ENCODE measurements at regions of chr17 and their contacts with region 1.

Region 1: GRCh38 chr17:79874329-79874981 is 35.2 kb upstream of the CBX4 start:
- DNase-seq: peak; percentile 75
- ATAC-seq: peak; percentile 93
- H3K4me3 ChIP-seq: no peak overlapping the region
- H3K27ac ChIP-seq: no peak overlapping the region
- H3K4me1 ChIP-seq: no peaks in the 10 kb centered on the region
- H3K27me3 ChIP-seq: no peaks in the 10 kb centered on the region
- CTCF ChIP-seq: peak; percentile 81

Region 2: DNA sequence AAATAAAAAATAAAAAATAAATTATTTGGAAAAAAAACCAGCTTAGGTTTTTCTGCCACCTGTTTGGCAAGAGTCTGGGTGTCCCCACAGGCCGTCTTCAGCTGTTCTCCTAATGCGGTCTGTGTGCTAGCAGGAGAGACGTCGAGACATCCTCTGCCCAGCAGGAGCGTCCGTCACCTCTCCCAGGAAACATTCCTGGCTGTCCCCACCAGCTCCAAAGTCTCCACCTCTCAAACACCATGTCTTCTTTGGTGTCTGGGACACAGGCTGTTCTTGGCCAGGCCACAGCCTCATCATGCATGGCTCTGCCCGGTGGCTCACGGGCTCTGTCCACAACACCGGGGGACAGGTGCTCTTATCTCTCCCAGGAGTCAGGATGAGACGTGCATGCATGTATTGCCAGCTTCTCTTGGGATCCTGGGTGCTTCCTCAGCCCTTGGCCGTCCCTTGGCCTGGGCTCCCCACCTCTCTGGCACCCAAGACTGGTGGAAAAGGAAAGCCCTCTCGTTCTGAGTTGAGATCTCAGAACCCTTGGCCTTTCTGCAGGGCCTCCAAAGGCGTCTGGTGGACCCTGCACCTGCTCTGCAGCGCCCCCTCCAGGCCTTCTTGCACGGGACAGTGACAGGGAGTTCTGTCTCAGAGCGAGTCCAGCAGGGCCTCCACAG is 49.7 kb after region 1 on chr17:
- CTCF ChIA-PET with region 1: no interaction called
- POLR2A ChIA-PET with region 1: interaction called, 3 read pairs
- intact Hi-C with region 1: loop called (anchors 2 kb)
- DNase-seq: peak; percentile 52
- ATAC-seq: no peak
- H3K4me3 ChIP-seq: no peak overlapping the region
- H3K27ac ChIP-seq: no peak overlapping the region
- H3K4me1 ChIP-seq: peaks cover 19% of the 10 kb centered on the region
- H3K27me3 ChIP-seq: peaks cover 2% of the 10 kb centered on the region; the same call in 1 of the 2 replicates
- CTCF ChIP-seq: peak; percentile 81

Measured in PC-3 (cell line).